Activated T-helper 1 cell treated with anti-CD3 and anti-CD28 coated beads, Interleukin-12 subunit alpha, Interleukin-12 subunit beta, Interleukin-2, Interleukin-4 antibody, amounts not matched to agents 30 ng/mL and 10 ng/mL and 1 ng/mL, durations not matched to agents 14 hours and 24 hours and 36 hours (primary cell): ENCODE measurements at regions of chr17 and their contacts with region 1.

Region 1: DNA sequence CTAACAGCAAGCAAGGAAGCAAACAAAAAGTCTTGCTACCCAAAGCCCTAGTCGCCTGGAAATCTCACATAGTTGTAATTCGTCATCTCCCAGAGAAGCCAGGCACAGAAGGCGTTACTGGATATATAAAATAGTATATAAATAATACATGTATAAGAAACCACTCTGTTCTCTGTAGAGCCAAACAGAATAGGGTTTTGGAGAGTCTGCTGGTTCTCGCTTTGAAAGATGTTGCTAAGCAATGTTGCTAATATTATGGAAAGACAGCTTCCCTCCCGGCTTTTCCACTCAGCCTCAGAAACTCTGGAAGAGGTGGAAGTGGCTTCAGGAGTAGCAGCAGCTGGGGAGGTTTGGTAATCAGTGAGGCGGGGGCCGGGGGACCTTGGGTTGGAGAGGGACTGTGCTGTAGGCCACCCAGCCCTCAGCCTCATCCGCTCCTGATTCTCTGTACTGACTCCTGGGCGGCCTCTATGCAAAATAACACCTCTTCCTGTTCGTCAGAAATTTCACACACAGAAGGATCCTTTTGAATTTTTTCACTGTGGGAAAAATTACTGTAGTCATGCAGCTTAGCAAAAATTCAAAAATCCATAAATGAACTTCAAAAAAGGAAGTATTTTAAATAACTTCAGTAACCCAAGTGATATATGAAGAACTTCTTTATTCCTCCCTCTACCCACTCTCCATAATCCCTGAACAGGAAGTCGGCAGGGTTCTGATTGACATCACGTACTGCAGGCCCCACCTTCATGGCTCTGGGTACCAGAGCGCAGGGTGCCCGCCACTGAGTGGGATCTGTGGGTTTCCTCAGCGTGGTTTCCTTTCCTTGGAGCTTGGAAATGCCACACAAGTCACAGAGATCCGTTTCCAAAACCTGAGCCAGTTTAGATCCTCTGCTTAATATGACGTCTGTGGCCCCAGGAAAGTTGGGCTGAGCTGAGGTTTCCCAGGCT is 51.4 kb downstream of the RAP1GAP2 start:
- DNase-seq: no peak
- H3K4me3 Mint-ChIP-seq: no peak overlapping the region
- H3K27ac Mint-ChIP-seq: no peak overlapping the region
- H3K4me1 Mint-ChIP-seq: peaks cover 13% of the 10 kb centered on the region
- H3K27me3 Mint-ChIP-seq: peaks cover 33% of the 10 kb centered on the region

Region 2: DNA sequence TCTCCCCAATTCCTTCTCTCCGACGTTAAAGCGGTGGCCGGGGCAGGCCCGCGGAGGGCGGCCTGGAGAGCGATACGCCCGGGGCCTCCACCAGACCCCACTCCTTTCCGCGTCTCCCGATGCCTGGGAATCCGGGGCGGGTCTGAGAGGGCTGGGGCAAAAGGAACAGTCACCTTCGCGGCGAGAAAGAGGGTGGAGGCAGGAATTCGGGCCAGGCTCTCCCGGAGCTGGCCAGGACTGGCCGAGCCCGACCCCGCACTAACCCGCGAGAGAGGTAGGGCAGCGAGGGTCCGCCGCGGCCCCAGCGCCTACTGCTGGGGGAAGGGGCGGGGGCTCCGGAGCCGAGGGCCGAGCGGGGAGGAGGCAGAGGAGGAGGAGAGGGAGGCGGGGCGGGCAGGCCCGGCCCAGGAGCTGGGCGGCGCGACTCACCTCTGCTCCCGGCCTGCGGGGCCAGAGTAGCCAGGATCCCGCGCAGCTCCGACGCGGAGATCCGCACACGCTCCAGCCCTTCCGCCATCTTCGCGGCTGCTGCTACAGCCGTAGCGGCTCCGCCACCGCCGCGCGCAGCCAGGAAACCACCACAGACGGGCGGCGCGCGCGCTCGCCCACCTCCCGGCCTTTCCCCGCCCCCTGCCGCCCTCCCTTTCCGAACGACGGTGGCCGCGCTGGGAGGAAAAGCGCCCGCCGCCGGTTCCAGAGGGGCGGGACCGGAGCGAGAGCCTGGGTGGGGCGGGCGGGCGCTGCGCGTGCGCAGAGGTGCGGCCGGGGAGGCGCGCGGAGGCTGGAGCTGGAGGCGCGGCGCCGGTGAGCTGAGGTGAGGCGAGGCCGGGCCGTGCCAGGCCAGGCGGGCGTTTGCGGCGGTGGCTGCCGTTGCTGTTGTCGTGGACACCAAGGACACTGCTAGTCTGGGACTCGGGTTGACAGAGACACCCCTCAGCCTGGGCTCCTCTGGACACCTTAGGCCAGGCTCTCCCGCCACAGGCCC is 544.2 kb before region 1 on chr17 and contains the starts of genes SMG6 and SRR:
- intact Hi-C with region 1: no loop called
- DNase-seq: peak; percentile 88
- H3K4me3 Mint-ChIP-seq: peak within 1 kb of the TSS; percentile 92
- H3K27ac Mint-ChIP-seq: peak within 1 kb of the TSS; percentile 85
- H3K4me1 Mint-ChIP-seq: peaks cover 46% of the 10 kb centered on the region
- H3K27me3 Mint-ChIP-seq: no peaks in the 10 kb centered on the region
- total RNA-seq, gene SMG6: 35.3 and 39.5 TPM in 2 replicates
- total RNA-seq, gene SRR: 14.9 and 17.4 TPM in 2 replicates

Region 3: DNA sequence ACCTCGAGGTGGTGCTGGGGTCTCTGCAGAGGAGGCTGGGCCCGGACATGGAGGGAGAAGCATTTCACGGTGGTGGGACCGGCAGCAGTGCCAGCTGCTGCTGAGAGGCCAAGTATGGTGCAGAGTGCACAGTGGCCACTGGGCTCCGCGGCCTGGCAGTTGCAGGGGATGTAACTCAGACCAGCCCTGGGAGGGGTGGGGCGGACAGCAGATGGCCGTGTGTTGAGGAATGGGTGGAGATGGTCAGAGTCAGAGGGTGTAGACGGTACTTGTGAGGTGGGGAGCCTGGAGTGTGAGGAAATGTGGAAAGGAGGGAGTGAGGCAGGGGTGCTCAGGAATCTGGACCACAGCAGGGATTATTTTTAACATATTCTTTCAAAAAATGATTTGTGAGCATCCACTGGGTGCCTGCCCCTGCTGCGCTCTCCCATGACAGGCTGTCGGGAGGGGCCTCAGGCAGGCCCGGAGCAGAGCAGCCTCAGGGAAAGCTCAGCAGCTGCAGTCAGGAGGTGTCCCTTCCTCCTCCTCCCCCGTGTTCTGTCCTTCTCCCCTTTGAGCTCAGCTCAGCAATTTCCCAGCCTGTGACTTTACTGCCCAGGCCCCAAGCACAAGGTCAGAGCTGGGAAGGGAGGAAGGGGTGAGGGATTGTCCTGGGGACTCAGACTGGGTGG is 61.7 kb after region 1 on chr17:
- intact Hi-C with region 1: no loop called
- DNase-seq: no peak
- H3K4me3 Mint-ChIP-seq: no peak overlapping the region
- H3K27ac Mint-ChIP-seq: no peak overlapping the region
- H3K4me1 Mint-ChIP-seq: no peaks in the 10 kb centered on the region
- H3K27me3 Mint-ChIP-seq: no peaks in the 10 kb centered on the region

Region 4: DNA sequence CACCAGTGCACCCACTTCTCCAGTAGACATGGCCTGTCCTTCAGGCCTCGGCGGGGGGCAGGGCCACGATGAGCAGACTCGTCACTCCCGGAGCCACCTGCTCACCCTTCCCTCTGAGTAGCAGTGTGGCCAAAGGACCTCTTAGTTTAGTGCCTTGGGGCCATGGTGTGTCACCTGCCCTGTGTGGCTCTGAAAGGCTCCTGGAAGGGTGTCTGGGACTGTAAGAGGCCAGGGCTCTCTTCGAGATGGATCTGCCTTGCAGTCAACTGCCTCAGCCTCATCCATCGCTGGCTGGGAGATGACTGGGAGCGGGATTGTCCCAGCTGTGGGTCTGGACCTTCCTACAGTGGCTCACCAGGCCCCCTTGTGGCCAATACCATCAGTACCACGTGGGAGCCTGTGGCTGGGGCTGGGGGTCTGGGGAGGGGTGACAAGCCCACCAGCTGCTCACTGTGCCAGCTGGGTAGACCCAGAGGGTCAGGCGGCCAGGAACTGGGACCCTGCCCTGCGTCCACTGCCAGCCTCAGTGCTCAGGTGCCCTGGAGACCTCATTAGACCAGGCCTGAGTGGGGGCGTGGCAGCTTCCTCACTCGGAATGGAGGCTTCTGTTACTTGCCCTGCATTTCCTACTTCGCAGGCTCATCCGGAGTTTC is 82.3 kb after region 1 on chr17:
- intact Hi-C with region 1: loop called (anchors 1 kb)
- DNase-seq: no peak
- H3K4me3 Mint-ChIP-seq: no peak overlapping the region
- H3K27ac Mint-ChIP-seq: no peak overlapping the region
- H3K4me1 Mint-ChIP-seq: peaks cover 10% of the 10 kb centered on the region
- H3K27me3 Mint-ChIP-seq: no peaks in the 10 kb centered on the region

Region 5: DNA sequence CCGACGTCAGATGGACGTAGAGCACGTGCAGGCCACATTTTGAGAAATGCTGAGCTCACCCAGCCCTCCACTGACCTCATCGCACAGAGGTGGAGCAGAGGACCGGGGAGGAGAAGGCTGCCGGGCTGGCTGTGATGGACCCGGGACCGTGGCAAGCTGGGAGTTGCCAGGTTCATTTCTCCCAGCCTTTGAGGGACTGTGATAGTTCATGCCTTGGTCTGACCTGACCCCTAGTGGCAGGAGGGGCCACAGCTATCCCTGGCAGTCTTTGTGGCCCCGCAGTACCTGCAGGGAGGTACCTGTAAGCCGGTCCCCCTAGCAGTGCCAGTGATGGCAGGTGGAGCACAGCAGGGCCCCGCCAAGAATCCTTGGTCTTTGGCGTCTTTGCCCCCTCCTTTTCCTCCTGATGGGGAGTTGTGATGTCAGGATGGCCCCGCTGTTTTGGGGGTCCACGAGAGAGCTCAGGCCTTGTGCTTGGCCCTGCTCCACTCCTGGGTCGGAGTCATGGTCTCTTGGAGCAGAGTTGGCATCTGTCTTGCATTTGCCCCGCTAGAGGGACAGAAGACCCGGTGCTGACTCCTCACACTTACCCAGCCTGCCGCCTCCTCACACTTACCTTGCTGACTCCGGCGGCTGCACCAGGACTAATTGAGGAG is 165.4 kb after region 1 on chr17:
- intact Hi-C with region 1: loop called (anchors 1 kb)
- DNase-seq: peak; percentile 19
- H3K4me3 Mint-ChIP-seq: no peak overlapping the region
- H3K27ac Mint-ChIP-seq: no peak overlapping the region
- H3K4me1 Mint-ChIP-seq: no peaks in the 10 kb centered on the region
- H3K27me3 Mint-ChIP-seq: no peaks in the 10 kb centered on the region